ENCODE measurements at regions of chr19 and their contacts with region 1.

Region 1: GRCh38 chr19:40806488-40807468 is 7.8 kb downstream of the EGLN2 start:
- DNase-seq: peak; percentile 61 to 69
- ATAC-seq: peak; percentile 19 to 32
- H3K4me3 ChIP-seq: peak overlapping the region; percentile 6 to 28 (median 14)
- H3K27ac ChIP-seq: peak overlapping the region; percentile 94 to 96 (median 96)
- H3K4me1 ChIP-seq: peaks cover 66 to 72% of the 10 kb centered on the region in 2 donors
- H3K27me3 ChIP-seq: no peaks in the 10 kb centered on the region
- CTCF ChIP-seq: peak; percentile 41 to 76 (median 75)
- POLR2A ChIP-seq: no peak

Region 2: GRCh38 chr19:40777937-40778705 is 28.7 kb before region 1 on chr19 and contains the start of gene RAB4B:
- in situ Hi-C with region 1: no loop called
- intact Hi-C with region 1: no loop called
- DNase-seq: peak; percentile 100
- ATAC-seq: peak; percentile 92
- H3K4me3 ChIP-seq: peak within 1 kb of the TSS; percentile 79 to 93 (median 89)
- H3K27ac ChIP-seq: peak within 1 kb of the TSS; percentile 93 to 99 (median 98)
- H3K4me1 ChIP-seq: peaks cover 7 to 14% of the 10 kb centered on the region in 2 donors
- H3K27me3 ChIP-seq: no peaks in the 10 kb centered on the region
- CTCF ChIP-seq: peak in 2 of 5 experiments; percentile 25 to 27
- POLR2A ChIP-seq: peak; percentile 76 to 81
- total RNA-seq, gene RAB4B: 14.9 to 27.2 (median 19.7) TPM

Region 3: GRCh38 chr19:41083516-41083915 is 276.7 kb after region 1 on chr19:
- in situ Hi-C with region 1: no loop called
- intact Hi-C with region 1: no loop called
- DNase-seq: no peak
- ATAC-seq: no peak
- H3K4me3 ChIP-seq: no peak overlapping the region
- H3K27ac ChIP-seq: no peak overlapping the region
- H3K4me1 ChIP-seq: no peaks in the 10 kb centered on the region
- H3K27me3 ChIP-seq: peaks cover 0 to 3% (median 0%) of the 10 kb centered on the region in 3 donors
- CTCF ChIP-seq: no peak
- POLR2A ChIP-seq: no peak

Region 4: GRCh38 chr19:41133260-41133659 is 326.5 kb after region 1 on chr19:
- in situ Hi-C with region 1: no loop called
- intact Hi-C with region 1: loop called (anchors 5 kb)
- DNase-seq: no peak
- ATAC-seq: no peak
- H3K4me3 ChIP-seq: no peak overlapping the region
- H3K27ac ChIP-seq: no peak overlapping the region
- H3K4me1 ChIP-seq: no peaks in the 10 kb centered on the region
- H3K27me3 ChIP-seq: peaks cover 0 to 5% (median 3%) of the 10 kb centered on the region in 3 donors
- CTCF ChIP-seq: no peak
- POLR2A ChIP-seq: no peak